Dorsolateral prefrontal cortex (tissue), 120 donors: ENCODE measurements at regions of chr6 and their contacts with region 1.

Region 1: GRCh38 chr6:151916680-151917164 is 109.2 kb downstream of the ESR1 start:
- DNase-seq: no peak
- H3K4me3 ChIP-seq: no peak overlapping the region
- H3K27ac ChIP-seq: no peak overlapping the region
- H3K27me3 ChIP-seq: no peaks in the 10 kb centered on the region
- CTCF ChIP-seq: no peak

Region 2: GRCh38 chr6:151900730-151901433 is 15.8 kb before region 1 on chr6:
- intact Hi-C with region 1: loop called in 1 of 2 experiments (anchors 2 kb)
- DNase-seq: no peak
- H3K4me3 ChIP-seq: no peak overlapping the region
- H3K27ac ChIP-seq: no peak overlapping the region
- H3K27me3 ChIP-seq: no peaks in the 10 kb centered on the region
- CTCF ChIP-seq: no peak